T-cell (primary cell): ENCODE measurements at regions of chr2 and their contacts with region 1.

Region 1: DNA sequence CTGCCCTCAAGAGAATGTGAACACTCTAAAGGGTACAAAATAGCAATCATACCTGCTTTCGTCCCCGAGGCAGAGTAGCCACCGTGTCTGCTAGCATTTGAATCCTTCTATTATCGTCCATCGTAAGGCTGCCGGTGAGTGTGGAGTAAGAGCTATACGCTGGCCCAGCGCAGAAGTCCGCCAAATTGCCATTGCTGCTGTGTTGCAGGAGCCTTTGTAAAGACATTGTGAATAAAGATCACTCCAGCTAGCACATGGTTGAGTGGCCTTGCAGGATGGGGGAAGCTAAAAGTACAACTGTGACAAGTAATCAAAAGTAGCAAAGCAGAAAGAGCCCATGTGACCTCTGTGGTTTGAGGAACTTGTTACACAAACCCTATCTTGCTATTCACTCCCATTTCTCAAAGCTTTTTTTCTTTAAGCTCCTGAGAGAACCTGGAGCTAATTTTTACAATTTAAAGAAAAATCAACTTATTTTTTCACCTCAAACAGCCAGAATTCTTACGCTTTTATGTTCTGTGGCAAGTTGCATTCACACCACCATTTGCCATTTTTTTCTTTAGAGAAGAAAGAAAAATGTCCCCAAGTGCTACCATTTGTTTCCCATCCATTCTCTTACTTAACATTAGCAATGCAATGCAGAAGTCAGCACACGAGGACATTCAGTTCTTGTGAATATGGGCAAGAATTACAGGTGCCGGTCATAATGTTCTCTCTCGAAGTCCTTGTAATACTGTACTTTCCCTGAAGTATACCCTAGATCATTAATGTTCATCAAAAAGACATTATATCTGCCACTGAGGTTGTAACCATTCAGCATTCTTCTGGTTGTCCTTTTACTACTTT is at the start of gene CYTIP:
- DNase-seq: peak in 32 of 35 experiments; percentile 28 to 83 (median 54)
- ATAC-seq: peak; percentile 60 to 68 (median 64)
- H3K4me3 ChIP-seq: peak within 1 kb of the TSS; percentile 87 to 94
- H3K4me3 Mint-ChIP-seq: peak within 1 kb of the TSS; percentile 92 to 97 (median 96)
- H3K27ac ChIP-seq: peak within 1 kb of the TSS; percentile 90
- H3K27ac Mint-ChIP-seq: peak within 1 kb of the TSS; percentile 97 to 99
- H3K4me1 ChIP-seq: peaks cover 9 to 37% of the 10 kb centered on the region in 2 experiments
- H3K4me1 Mint-ChIP-seq: peaks cover 41 to 68% (median 45%) of the 10 kb centered on the region in 3 donors
- H3K27me3 ChIP-seq: no peaks in the 10 kb centered on the region
- H3K27me3 Mint-ChIP-seq: no peaks in the 10 kb centered on the region
- total RNA-seq, gene CYTIP: 264 to 465 (median 273) TPM

Region 2: DNA sequence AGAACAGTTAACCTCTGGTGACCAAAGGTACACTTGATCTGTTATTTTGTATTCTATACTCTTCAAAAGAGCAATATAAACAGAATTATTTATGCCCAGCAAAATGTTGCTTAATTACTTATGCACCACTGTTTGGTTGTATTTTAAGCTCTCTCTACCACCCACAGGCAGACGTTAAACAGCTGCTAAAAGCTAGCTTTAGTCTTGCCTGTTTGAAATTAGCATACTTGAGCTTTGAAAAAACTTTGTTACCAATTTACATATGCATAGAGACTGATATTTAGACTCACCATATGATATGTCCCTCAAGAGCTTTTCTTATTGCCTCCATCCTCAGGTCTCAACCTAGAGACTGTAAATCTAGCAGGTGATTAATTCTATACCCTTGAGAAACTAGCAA is 1538.4 kb before region 1 on chr2:
- CTCF ChIA-PET with region 1: no interaction called
- POLR2A ChIA-PET with region 1: no interaction called
- DNase-seq: no peak
- ATAC-seq: no peak
- H3K4me3 ChIP-seq: no peak overlapping the region
- H3K4me3 Mint-ChIP-seq: no peak overlapping the region
- H3K27ac ChIP-seq: no peak overlapping the region
- H3K27ac Mint-ChIP-seq: no peak overlapping the region
- H3K4me1 ChIP-seq: no peaks in the 10 kb centered on the region
- H3K4me1 Mint-ChIP-seq: no peaks in the 10 kb centered on the region
- H3K27me3 ChIP-seq: no peaks in the 10 kb centered on the region
- H3K27me3 Mint-ChIP-seq: no peaks in the 10 kb centered on the region

Region 3: GRCh38 chr2:157404363-157404762 is 39.7 kb before region 1 on chr2:
- CTCF ChIA-PET with region 1: interaction called, 4 to 7 read pairs
- POLR2A ChIA-PET with region 1: interaction called, 11 to 49 read pairs
- DNase-seq: peak; percentile 33 to 89 (median 69)
- ATAC-seq: peak; percentile 92 to 97 (median 94)
- H3K4me3 ChIP-seq: no peak overlapping the region
- H3K4me3 Mint-ChIP-seq: peak overlapping the region; percentile 14 to 67 (median 59)
- H3K27ac ChIP-seq: peak overlapping the region; percentile 97
- H3K27ac Mint-ChIP-seq: peak overlapping the region; percentile 99 to 100
- H3K4me1 ChIP-seq: peaks cover 32 to 36% of the 10 kb centered on the region in 2 experiments
- H3K4me1 Mint-ChIP-seq: peaks cover 68 to 81% (median 73%) of the 10 kb centered on the region in 3 donors
- H3K27me3 ChIP-seq: no peaks in the 10 kb centered on the region
- H3K27me3 Mint-ChIP-seq: no peaks in the 10 kb centered on the region

Region 4: DNA sequence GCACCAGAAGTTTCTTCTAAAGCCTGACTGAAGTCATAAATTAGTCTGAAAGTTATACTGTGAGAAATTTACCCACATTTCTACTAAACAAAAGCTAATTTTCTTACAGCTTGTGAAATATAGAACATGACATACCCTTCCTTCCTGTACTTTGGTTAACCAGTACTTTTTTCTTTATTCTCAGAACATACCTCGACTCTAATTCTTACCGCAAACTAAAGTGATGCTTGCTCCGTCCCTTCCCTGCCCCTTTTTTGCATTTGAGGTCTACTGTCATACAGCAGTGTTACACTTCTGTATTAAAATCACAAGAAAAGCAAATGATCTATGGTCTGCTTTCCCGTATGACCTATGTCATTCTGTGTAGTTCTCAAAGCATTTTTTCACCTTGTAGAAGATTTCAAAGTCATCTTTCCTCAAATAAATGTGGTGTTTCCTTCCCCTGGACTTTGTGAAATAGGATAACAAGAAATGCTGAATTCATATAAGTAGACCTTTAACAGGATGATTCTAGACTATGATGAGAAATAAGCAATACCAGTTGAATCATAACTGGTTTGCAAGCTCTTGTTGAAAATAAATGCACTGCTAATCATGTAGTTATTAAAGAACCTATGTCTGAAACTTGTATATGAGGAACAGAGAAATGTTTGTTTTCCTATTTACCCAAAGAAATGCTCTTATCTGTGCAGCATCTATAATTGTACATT is 30.5 kb before region 1 on chr2:
- CTCF ChIA-PET with region 1: interaction called, 5 to 16 read pairs
- POLR2A ChIA-PET with region 1: interaction called, 28 to 216 read pairs
- DNase-seq: peak in 32 of 35 experiments; percentile 37 to 83 (median 63)
- ATAC-seq: peak; percentile 81 to 88 (median 85)
- H3K4me3 ChIP-seq: no peak overlapping the region
- H3K4me3 Mint-ChIP-seq: peak overlapping the region; percentile 47 to 64 (median 54)
- H3K27ac ChIP-seq: peak overlapping the region; percentile 91
- H3K27ac Mint-ChIP-seq: peak overlapping the region; percentile 96 to 99
- H3K4me1 ChIP-seq: peaks cover 39 to 91% of the 10 kb centered on the region in 2 experiments
- H3K4me1 Mint-ChIP-seq: peaks cover 89 to 93% (median 93%) of the 10 kb centered on the region in 3 donors
- H3K27me3 ChIP-seq: no peaks in the 10 kb centered on the region
- H3K27me3 Mint-ChIP-seq: no peaks in the 10 kb centered on the region

Region 5: GRCh38 chr2:157420771-157421323 is 23.2 kb before region 1 on chr2:
- CTCF ChIA-PET with region 1: interaction called, 5 to 16 read pairs
- POLR2A ChIA-PET with region 1: interaction called, 28 to 216 read pairs
- DNase-seq: peak in 1 of 35 experiments; percentile 53
- ATAC-seq: peak in 2 of 4 experiments; percentile 2 to 9
- H3K4me3 ChIP-seq: no peak overlapping the region
- H3K4me3 Mint-ChIP-seq: peak overlapping the region in 2 of 3 donors; percentile 24 to 60
- H3K27ac ChIP-seq: peak overlapping the region; percentile 91
- H3K27ac Mint-ChIP-seq: peak overlapping the region; percentile 90 to 93
- H3K4me1 ChIP-seq: peaks cover 48 to 77% of the 10 kb centered on the region in 2 experiments
- H3K4me1 Mint-ChIP-seq: peaks cover 72 to 80% (median 74%) of the 10 kb centered on the region in 3 donors
- H3K27me3 ChIP-seq: no peaks in the 10 kb centered on the region
- H3K27me3 Mint-ChIP-seq: no peaks in the 10 kb centered on the region

Region 6: GRCh38 chr2:157433394-157433793 is 10.6 kb before region 1 on chr2:
- CTCF ChIA-PET with region 1: interaction called in 1 of 2 experiments, 8 read pairs
- POLR2A ChIA-PET with region 1: interaction called, 10 to 216 read pairs
- DNase-seq: no peak
- ATAC-seq: peak; percentile 28 to 43 (median 34)
- H3K4me3 ChIP-seq: peak overlapping the region in 1 of 2 donors; percentile 87
- H3K4me3 Mint-ChIP-seq: peak overlapping the region; percentile 92 to 97 (median 96)
- H3K27ac ChIP-seq: peak overlapping the region; percentile 90
- H3K27ac Mint-ChIP-seq: peak overlapping the region; percentile 93 to 94
- H3K4me1 ChIP-seq: peaks cover 32 to 61% of the 10 kb centered on the region in 2 experiments
- H3K4me1 Mint-ChIP-seq: peaks cover 78 to 97% (median 89%) of the 10 kb centered on the region in 3 donors
- H3K27me3 ChIP-seq: no peaks in the 10 kb centered on the region
- H3K27me3 Mint-ChIP-seq: no peaks in the 10 kb centered on the region

Region 7: GRCh38 chr2:157468931-157469708 is 25.1 kb after region 1 on chr2:
- CTCF ChIA-PET with region 1: interaction called in 1 of 2 experiments, 4 read pairs
- POLR2A ChIA-PET with region 1: interaction called, 7 to 14 read pairs
- DNase-seq: peak in 5 of 35 experiments; percentile 16 to 78 (median 20)
- ATAC-seq: peak; percentile 88 to 95 (median 90)
- H3K4me3 ChIP-seq: no peak overlapping the region
- H3K4me3 Mint-ChIP-seq: peak overlapping the region; percentile 62 to 73 (median 67)
- H3K27ac ChIP-seq: peak overlapping the region; percentile 87
- H3K27ac Mint-ChIP-seq: peak overlapping the region; percentile 97 to 99
- H3K4me1 ChIP-seq: peaks cover 19 to 25% of the 10 kb centered on the region in 2 experiments
- H3K4me1 Mint-ChIP-seq: peaks cover 67 to 82% (median 70%) of the 10 kb centered on the region in 3 donors
- H3K27me3 ChIP-seq: no peaks in the 10 kb centered on the region
- H3K27me3 Mint-ChIP-seq: no peaks in the 10 kb centered on the region

Region 8: DNA sequence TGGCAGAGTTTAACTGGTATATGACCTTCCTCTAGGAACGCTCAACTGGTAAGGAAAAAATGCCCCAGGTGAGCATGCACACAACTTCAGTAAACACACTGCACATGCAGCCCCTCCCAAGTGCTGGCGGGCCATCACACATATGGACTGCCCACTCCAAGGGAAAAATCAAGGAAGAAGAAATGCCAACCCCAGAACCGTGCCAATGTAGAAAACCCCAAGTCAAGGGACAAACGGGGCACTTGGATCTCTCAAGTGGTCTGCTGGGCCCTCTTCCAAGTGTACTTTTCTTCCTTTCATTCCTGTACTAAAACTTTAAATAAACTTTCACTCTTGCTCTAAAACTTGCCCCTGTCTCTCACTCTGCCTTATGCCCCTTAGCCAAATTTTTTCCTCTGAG is 508.5 kb after region 1 on chr2:
- CTCF ChIA-PET with region 1: no interaction called
- POLR2A ChIA-PET with region 1: no interaction called
- DNase-seq: no peak
- ATAC-seq: no peak
- H3K4me3 ChIP-seq: no peak overlapping the region
- H3K4me3 Mint-ChIP-seq: no peak overlapping the region
- H3K27ac ChIP-seq: no peak overlapping the region
- H3K27ac Mint-ChIP-seq: no peak overlapping the region
- H3K4me1 ChIP-seq: no peaks in the 10 kb centered on the region
- H3K4me1 Mint-ChIP-seq: peaks cover 0 to 8% (median 3%) of the 10 kb centered on the region in 3 donors
- H3K27me3 ChIP-seq: no peaks in the 10 kb centered on the region
- H3K27me3 Mint-ChIP-seq: no peaks in the 10 kb centered on the region